B cell (primary cell): ENCODE measurements at regions of chr2 and their contacts with region 1.

Region 1: DNA sequence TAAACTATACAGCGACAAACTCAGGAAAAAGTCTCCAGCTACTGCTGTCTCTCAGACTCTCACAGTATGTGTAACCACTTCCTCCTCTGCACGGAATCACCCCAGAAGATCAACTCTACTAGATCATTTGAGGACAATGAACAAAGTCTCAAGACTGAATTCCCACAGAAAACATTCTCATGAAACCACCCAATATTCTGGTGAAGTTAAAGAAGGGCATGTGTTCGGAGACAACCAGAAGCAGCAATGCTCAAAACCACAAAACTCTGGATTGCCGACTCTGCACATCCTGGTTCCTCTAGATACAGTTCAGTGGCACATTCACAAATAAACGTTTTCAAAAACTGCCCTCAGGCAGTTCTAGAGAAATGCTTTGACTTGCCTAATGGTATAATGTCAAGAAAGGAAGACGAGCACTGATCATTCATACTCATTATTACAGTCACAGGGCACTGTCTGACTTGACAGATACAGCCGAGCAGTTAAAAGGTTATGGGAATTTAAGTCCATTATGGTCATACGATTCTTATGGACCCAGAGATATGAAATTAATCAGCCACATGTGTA is 91.9 kb upstream of the STK17B start:
- DNase-seq: peak; percentile 74
- ATAC-seq: peak; percentile 84
- H3K4me3 ChIP-seq: peak overlapping the region in 4 of 5 experiments; percentile 21 to 36 (median 24)
- H3K4me3 Mint-ChIP-seq: peak overlapping the region; percentile 78
- H3K27ac ChIP-seq: peak overlapping the region; percentile 67 to 89
- H3K27ac Mint-ChIP-seq: peak overlapping the region; percentile 92
- H3K4me1 ChIP-seq: peaks cover 57 to 72% of the 10 kb centered on the region in 2 donors
- H3K4me1 Mint-ChIP-seq: peaks cover 71% of the 10 kb centered on the region
- H3K27me3 ChIP-seq: no peaks in the 10 kb centered on the region
- H3K27me3 Mint-ChIP-seq: no peaks in the 10 kb centered on the region
- CTCF ChIP-seq: no peak

Region 2: DNA sequence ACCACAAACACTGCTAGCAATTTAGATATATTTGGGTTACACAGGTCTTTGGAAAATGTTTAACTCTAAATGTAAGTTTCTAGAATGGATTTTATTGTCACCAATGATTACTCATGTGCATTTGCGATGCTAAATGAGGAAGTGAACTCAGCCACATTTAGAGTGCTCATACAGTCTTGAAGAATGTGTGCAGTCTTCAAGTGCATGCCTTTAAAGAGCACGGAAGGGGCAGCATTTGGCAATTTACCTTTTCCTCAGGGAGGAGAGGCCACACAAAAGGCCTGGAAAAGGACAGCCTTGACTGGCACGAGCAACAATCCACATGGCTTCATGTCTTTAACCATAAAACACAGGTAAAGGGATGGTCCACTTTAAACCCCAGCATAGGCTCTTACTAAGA is 13.4 kb before region 1 on chr2:
- CTCF ChIA-PET with region 1: interaction called, 21 read pairs
- POLR2A ChIA-PET with region 1: interaction called, 4 read pairs
- intact Hi-C with region 1: loop called (anchors 2 kb)
- DNase-seq: peak; percentile 68
- ATAC-seq: peak; percentile 89
- H3K4me3 ChIP-seq: peak overlapping the region in 1 of 5 experiments; percentile 26
- H3K4me3 Mint-ChIP-seq: peak overlapping the region; percentile 21
- H3K27ac ChIP-seq: peak overlapping the region; percentile 43 to 78
- H3K27ac Mint-ChIP-seq: peak overlapping the region; percentile 88
- H3K4me1 ChIP-seq: peaks cover 57 to 62% of the 10 kb centered on the region in 2 donors
- H3K4me1 Mint-ChIP-seq: peaks cover 73% of the 10 kb centered on the region
- H3K27me3 ChIP-seq: no peaks in the 10 kb centered on the region
- H3K27me3 Mint-ChIP-seq: no peaks in the 10 kb centered on the region
- CTCF ChIP-seq: no peak

Region 3: DNA sequence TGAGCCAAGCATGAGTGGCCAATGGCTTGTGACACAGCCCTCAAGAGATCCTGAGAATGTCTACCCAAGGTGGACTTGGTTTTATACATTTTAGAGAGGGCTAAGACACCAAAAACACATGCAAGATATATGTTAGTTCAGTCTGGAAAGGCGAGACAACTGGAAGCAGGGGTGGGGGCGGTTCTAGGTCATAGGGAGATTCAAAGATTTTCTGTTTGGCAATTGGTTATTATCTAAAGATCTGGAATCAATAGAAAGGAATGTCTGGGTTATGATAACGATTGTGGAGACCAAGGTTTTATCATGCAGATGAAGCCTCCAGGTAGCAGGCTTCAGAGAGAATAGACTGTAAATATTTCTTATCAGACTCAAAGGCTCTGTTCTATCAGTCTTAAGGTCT is 19.1 kb after region 1 on chr2:
- CTCF ChIA-PET with region 1: interaction called, 24 read pairs
- POLR2A ChIA-PET with region 1: interaction called, 11 read pairs
- intact Hi-C with region 1: no loop called
- DNase-seq: no peak
- ATAC-seq: no peak
- H3K4me3 ChIP-seq: no peak overlapping the region
- H3K4me3 Mint-ChIP-seq: no peak overlapping the region
- H3K27ac ChIP-seq: no peak overlapping the region
- H3K27ac Mint-ChIP-seq: no peak overlapping the region
- H3K4me1 ChIP-seq: peaks cover 7 to 16% of the 10 kb centered on the region in 2 donors
- H3K4me1 Mint-ChIP-seq: peaks cover 24% of the 10 kb centered on the region
- H3K27me3 ChIP-seq: no peaks in the 10 kb centered on the region
- H3K27me3 Mint-ChIP-seq: no peaks in the 10 kb centered on the region
- CTCF ChIP-seq: no peak

Region 4: DNA sequence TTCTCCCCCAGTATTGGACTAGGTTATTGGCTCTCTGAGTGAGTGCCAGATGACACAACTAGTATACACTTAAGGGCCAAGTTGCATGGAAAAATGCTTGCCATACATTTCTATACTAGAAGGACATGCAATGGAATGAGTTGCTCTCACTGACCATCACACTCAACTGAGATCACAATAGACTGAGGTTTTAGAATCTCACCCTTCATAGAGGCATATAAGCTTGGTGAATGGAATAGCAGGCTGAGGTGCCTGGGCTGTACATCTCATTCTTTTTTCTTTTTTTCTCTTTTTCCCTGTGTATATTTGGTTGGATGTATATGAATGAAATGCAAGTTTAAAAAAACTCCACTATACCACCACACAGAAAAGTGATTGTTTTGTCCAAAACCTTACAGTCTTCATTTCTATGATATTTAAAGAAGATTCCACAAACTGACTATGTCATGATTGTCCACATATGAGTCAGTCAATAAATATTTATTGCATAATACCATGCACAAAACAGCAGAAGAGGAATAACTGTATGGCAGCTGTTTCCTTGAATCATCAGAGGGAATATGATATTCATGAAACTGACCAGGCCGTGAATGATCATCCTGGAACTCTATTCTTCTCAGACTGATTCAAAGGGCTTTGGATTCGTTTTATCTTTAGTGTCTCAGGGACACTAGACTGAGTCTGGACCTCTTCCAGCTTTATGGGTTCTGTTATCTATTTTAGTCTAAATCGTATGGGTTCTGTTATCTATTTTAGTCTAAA is 30.7 kb after region 1 on chr2:
- CTCF ChIA-PET with region 1: no interaction called
- POLR2A ChIA-PET with region 1: no interaction called
- intact Hi-C with region 1: no loop called
- DNase-seq: no peak
- ATAC-seq: no peak
- H3K4me3 ChIP-seq: no peak overlapping the region
- H3K4me3 Mint-ChIP-seq: no peak overlapping the region
- H3K27ac ChIP-seq: no peak overlapping the region
- H3K27ac Mint-ChIP-seq: peak overlapping the region; percentile 12
- H3K4me1 ChIP-seq: peaks cover 32 to 36% of the 10 kb centered on the region in 2 donors
- H3K4me1 Mint-ChIP-seq: peaks cover 40% of the 10 kb centered on the region
- H3K27me3 ChIP-seq: no peaks in the 10 kb centered on the region
- H3K27me3 Mint-ChIP-seq: no peaks in the 10 kb centered on the region
- CTCF ChIP-seq: no peak

Region 5: DNA sequence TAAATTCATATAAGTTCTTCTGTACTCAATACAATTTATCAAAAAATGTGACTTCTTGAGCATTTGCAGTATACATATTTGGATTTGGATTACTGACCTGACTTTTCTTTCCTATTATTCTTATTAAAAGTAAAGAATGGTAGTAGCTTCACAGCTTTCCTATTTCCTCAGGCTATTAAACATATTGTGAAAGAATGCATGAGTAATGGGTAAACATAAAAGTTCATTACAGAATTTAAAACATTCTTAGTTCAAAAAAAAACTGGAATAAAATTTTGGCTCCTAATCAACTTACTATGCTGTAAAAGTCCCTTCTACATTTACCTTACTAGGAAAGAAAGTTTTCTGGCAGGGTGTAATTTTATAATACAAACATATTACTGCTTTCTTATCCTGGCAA is 573.2 kb after region 1 on chr2:
- CTCF ChIA-PET with region 1: no interaction called
- POLR2A ChIA-PET with region 1: no interaction called
- intact Hi-C with region 1: no loop called
- DNase-seq: no peak
- ATAC-seq: no peak
- H3K4me3 ChIP-seq: no peak overlapping the region
- H3K4me3 Mint-ChIP-seq: no peak overlapping the region
- H3K27ac ChIP-seq: no peak overlapping the region
- H3K27ac Mint-ChIP-seq: no peak overlapping the region
- H3K4me1 ChIP-seq: no peaks in the 10 kb centered on the region
- H3K4me1 Mint-ChIP-seq: no peaks in the 10 kb centered on the region
- H3K27me3 ChIP-seq: no peaks in the 10 kb centered on the region
- H3K27me3 Mint-ChIP-seq: no peaks in the 10 kb centered on the region
- CTCF ChIP-seq: no peak

Region 6: GRCh38 chr2:196849895-196850294 is 586.6 kb after region 1 on chr2:
- CTCF ChIA-PET with region 1: no interaction called
- POLR2A ChIA-PET with region 1: no interaction called
- intact Hi-C with region 1: no loop called
- DNase-seq: no peak
- ATAC-seq: no peak
- H3K4me3 ChIP-seq: no peak overlapping the region
- H3K4me3 Mint-ChIP-seq: no peak overlapping the region
- H3K27ac ChIP-seq: no peak overlapping the region
- H3K27ac Mint-ChIP-seq: no peak overlapping the region
- H3K4me1 ChIP-seq: no peaks in the 10 kb centered on the region
- H3K4me1 Mint-ChIP-seq: no peaks in the 10 kb centered on the region
- H3K27me3 ChIP-seq: no peaks in the 10 kb centered on the region
- H3K27me3 Mint-ChIP-seq: no peaks in the 10 kb centered on the region
- CTCF ChIP-seq: no peak